ENCODE measurements at regions of chr13 and their contacts with region 1.

Region 1: DNA sequence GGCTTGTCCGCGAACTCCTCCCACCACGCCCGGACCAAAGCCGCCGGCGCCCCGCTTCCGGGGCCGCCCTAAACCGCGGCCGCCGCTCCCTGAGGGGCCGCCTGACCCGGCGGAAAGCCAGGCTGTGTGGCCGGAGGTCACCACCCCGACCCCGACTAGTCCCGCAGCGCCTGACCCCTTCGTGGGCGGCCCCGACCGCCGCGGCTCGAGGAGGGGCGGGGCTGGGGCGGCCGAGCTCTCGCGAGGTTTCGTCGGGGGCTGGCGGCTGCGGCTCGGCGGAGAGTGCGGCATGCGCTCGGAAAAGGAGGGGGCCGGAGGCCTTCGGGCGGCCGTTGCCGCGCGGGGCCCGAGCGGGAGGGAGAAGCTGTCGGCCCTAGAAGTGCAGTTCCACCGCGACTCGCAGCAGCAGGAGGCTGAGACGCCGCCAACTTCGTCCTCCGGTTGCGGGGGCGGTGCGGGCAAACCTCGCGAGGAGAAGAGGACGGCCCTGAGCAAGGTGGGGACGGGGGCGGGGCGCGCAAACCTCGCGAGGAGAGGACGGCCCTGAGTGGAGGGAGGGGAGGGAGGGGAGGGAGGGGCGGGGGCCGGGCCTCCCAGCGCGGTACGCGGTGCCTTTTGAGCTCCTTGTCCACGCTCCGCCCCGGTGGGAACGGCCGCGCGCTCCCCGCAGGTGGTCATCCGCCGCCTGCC is at the start of gene UPF3A:
- DNase-seq: peak; percentile 71 to 92 (median 82)
- H3K4me3 ChIP-seq: peak within 1 kb of the TSS; percentile 54 to 95 (median 85)
- H3K27ac ChIP-seq: peak within 1 kb of the TSS; percentile 78 to 100 (median 97)
- H3K27me3 ChIP-seq: no peaks in the 10 kb centered on the region
- CTCF ChIP-seq: peak in 3 of 56 donors; percentile 10 to 25 (median 20)
- total RNA-seq, gene UPF3A: 63.4 to 144 (median 93.5) TPM

Region 2: DNA sequence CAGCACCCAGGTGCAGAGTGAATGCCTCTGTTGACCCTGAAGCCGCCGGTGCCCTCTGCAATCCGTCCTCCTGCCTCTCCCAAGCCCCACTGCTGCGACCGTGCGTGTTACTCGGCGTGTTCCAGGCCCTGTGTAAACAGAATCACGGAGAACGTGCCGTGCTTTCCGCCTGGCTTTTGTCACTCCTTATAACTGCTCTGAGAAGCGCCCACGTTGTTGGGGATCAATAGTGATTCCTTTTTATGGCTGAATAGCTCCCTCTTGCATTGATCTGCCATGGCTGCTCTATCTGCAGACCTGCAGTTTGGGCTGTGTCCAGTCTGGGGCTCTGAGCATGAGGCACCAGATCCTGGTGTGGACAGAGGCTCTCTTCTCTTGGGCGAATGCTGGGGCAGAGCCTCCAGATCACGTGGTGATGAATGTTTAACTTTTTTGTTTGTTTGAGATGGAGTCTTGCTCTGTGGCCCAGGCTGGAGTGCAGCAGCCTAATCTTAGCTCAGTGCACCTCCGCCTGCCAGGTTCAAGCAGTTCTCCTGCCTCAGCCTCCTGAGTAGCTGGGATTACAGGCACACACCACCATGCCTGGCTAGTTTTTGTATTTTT is 844.0 kb before region 1 on chr13:
- intact Hi-C with region 1: no loop called
- DNase-seq: no peak
- H3K4me3 ChIP-seq: no peak overlapping the region
- H3K27ac ChIP-seq: no peak overlapping the region
- H3K27me3 ChIP-seq: no peaks in the 10 kb centered on the region
- CTCF ChIP-seq: no peak

Region 3: GRCh38 chr13:114314074-114314912 is 32.8 kb after region 1 on chr13 and contains the start of gene CHAMP1:
- intact Hi-C with region 1: loop called (anchors 2 kb)
- DNase-seq: peak; percentile 88 to 97 (median 94)
- H3K4me3 ChIP-seq: peak within 1 kb of the TSS; percentile 58 to 99 (median 85)
- H3K27ac ChIP-seq: peak within 1 kb of the TSS; percentile 1 to 96 (median 91)
- H3K27me3 ChIP-seq: no peaks in the 10 kb centered on the region
- CTCF ChIP-seq: peak in 28 of 56 donors; percentile 4 to 41 (median 24)
- total RNA-seq, gene CHAMP1: 13.3 to 26.7 (median 19.3) TPM